ENCODE measurements at regions of chr11 and their contacts with region 1.

Region 1: DNA sequence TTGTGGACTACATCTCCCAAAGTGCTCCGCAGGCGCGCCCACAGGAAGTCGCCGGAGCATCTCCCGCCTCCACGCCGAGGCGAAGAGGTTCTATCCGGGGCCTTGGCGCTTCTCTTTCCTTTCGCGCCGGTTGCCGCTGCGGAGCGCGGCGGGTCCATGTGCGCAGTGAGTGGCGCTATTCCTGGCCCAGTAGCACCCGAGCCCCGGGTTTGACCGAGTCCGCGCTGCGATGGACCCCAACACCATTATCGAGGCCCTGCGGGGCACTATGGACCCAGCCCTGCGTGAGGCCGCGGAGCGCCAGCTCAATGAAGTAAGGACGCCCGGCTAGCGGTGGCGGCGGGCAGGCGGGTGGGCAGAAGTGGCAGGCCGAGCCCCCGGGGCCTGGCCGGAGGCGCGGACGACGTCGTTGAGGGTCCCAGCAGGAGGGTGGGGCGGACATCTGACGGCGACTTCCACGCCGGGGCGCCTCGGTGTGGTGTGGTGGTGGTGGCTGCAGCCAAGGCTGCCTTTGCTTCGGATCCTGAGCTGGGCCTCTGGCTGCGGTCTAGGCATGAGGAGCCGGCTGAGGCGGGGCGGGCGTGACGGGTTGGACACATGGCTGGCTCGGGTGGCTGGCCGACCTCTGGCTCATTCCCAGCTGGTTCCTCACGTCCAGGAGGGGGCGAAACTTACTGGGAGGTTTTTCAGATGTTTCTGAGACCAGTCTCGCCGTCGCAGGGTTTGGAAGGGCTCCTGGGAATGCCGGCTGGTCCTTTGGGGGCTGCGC is at the start of gene IPO7:
- DNase-seq: peak; percentile 87
- ATAC-seq: peak; percentile 96
- H3K4me3 Mint-ChIP-seq: peak within 1 kb of the TSS; percentile 93
- H3K27ac Mint-ChIP-seq: peak within 1 kb of the TSS; percentile 89
- H3K4me1 Mint-ChIP-seq: peaks cover 20% of the 10 kb centered on the region
- H3K27me3 Mint-ChIP-seq: no peaks in the 10 kb centered on the region
- total RNA-seq, gene IPO7: 78.9 to 81.1 TPM

Region 2: DNA sequence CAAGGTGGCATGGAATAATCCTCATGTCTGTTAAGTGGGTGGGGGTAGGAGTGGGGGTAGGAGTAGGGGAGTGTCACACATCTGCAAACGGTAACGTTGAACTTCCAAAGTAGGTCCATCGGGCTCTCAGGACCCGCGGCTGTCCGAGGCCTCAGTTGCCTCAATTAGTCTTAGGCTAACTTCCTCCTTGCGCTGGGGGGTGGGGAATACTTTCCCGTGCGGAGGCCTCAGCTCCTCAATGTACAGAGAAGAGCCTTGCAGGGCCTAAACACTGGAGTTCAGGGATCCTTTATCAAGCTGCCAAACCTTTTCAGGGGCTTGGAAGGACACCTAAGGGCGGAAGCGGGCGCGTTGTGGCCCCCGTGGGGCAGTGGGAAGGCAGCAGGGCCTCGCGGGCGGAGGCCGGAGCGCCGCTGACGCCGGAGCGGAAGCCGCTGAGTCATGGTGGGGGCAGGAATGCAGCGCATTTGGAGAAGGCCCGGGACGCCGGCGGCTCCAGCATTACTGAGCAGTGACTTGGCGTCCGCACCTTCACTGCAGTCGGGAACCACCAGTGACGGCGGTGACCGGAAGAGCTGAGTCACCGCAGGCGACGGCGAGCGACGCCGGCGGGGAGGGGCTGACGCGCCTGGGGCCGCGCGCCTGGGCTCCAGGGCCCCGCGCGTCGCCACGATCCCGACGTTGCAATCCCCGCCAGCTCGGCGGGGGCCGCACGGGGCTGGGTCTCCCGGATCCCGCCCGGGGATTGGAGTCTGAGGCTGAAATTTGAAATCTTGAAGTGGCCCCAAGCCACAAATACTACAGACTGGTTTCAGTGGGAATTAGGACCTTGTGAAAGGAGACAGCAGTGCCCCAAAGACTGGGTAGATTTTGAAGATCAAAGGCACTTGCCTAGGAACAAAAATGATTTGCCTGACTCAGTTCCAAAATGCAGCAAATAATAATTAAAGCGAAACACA is 20.5 kb before region 1 on chr11:
- POLR2A ChIA-PET with region 1: interaction called, 14 read pairs
- DNase-seq: peak; percentile 82
- ATAC-seq: peak; percentile 99
- H3K4me3 Mint-ChIP-seq: peak overlapping the region; percentile 82
- H3K27ac Mint-ChIP-seq: peak overlapping the region; percentile 85
- H3K4me1 Mint-ChIP-seq: peaks cover 14% of the 10 kb centered on the region
- H3K27me3 Mint-ChIP-seq: peaks cover 3% of the 10 kb centered on the region

Region 3: DNA sequence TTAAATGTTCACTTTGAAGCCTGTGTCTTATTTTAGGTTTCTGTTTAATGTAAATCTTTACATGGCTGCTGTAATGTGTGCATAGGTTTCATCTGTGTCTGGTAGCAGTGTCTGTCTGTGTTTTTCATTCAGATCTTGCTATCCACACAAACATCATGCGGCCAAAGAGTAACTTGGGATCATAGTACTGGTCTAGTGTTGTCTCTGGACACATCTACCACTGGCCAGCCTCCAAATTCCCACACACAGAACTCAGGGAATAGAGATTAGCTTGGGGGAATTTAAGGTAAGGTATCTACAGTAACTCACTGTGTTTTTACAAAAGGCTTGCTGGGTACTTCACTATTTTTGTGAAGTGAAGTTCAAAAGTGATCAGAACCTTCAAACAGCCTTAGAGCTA is 44.0 kb after region 1 on chr11:
- POLR2A ChIA-PET with region 1: no interaction called
- DNase-seq: no peak
- ATAC-seq: no peak
- H3K4me3 Mint-ChIP-seq: no peak overlapping the region
- H3K27ac Mint-ChIP-seq: no peak overlapping the region
- H3K4me1 Mint-ChIP-seq: no peaks in the 10 kb centered on the region
- H3K27me3 Mint-ChIP-seq: no peaks in the 10 kb centered on the region

Region 4: GRCh38 chr11:9460322-9461067 is 75.8 kb after region 1 on chr11 and contains the start of gene ZNF143:
- POLR2A ChIA-PET with region 1: interaction called, 20 read pairs
- DNase-seq: peak; percentile 99
- ATAC-seq: peak; percentile 91
- H3K4me3 Mint-ChIP-seq: peak within 1 kb of the TSS; percentile 95
- H3K27ac Mint-ChIP-seq: peak within 1 kb of the TSS; percentile 95
- H3K4me1 Mint-ChIP-seq: peaks cover 20% of the 10 kb centered on the region
- H3K27me3 Mint-ChIP-seq: no peaks in the 10 kb centered on the region
- total RNA-seq, gene ZNF143: 37.7 to 48.8 TPM

Region 5: DNA sequence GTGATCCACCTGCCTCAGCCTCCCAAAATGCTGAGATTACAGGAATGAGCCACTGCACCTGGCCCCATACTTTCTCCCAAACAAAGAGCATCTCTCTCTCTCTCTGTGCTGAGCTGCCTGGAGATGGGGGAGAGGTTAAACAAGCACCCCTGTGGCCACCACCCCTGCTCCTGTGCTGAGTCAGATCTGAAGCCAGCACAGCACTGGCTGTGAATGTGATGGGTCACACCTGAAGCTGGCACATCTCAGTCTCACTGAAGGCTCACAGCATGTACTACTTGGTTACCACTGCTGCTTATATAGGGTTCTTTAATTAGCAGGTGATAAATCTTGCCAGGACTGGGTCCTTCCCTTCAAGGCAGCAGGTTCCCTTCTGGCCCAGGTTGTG is 178.0 kb after region 1 on chr11:
- POLR2A ChIA-PET with region 1: no interaction called
- DNase-seq: no peak
- ATAC-seq: no peak
- H3K4me3 Mint-ChIP-seq: no peak overlapping the region
- H3K27ac Mint-ChIP-seq: no peak overlapping the region
- H3K4me1 Mint-ChIP-seq: peaks cover 8% of the 10 kb centered on the region
- H3K27me3 Mint-ChIP-seq: peaks cover 5% of the 10 kb centered on the region

Measured in activated naive CD8-positive, alpha-beta T cell treated with anti-CD3 and anti-CD28 coated beads, Interleukin-2, amount 10 ng/mL, durations not matched to agents 7 days and 5 days (primary cell).